ENCODE measurements at regions of chr6 and their contacts with region 1.

Region 1: DNA sequence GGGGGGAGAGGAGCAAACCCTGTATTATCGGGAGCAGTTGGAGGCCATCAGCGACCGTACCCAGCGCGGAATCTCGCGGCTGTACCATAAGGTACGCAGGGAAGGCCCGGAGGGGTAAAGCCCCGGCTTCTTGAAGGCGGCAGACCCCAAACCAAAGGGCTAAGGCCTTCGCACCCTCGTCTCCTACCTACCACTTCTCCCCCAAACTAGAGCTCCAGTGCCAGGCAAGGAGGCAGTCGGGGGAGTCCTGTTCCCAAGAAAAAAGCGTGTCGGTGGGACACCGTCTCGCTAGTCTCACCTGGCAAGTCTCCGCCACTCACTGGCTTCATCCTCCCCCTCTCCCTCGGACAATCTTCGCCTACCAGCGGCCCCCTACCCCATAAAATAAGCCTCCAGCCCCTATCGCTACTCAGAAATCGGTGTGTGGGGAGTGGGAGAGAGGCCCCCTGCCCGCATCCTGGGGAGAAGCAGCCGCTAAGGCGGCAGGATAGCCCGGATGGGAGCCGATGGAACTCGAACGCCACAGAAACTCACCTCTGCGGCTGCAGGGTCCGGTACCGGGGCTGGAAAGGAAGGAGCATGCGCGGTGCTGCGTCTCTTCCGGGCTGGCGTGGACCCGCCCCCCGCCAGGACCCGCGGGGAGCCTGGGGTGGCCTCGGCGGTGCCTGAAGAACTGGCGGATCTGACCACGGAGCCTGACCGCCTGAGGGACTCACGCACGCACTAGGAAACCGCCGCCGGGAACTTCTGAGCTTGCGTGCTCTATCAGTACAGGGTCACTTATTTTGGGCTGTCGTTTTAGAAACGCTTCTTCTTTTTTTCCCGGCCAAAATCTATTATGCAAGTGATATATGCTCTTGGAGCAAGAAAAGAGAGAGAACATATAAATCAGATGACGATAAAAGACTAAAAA is at the start of gene RPS10:
- DNase-seq: peak; percentile 81 to 96 (median 88)
- ATAC-seq: peak; percentile 97
- H3K4me3 ChIP-seq: peak within 1 kb of the TSS; percentile 75
- H3K4me3 Mint-ChIP-seq: peak within 1 kb of the TSS; percentile 99
- H3K27ac ChIP-seq: peak within 1 kb of the TSS; percentile 73 to 74
- H3K27ac Mint-ChIP-seq: peak within 1 kb of the TSS; percentile 97
- H3K4me1 ChIP-seq: peaks cover 37% of the 10 kb centered on the region
- H3K4me1 Mint-ChIP-seq: peaks cover 39% of the 10 kb centered on the region
- H3K27me3 ChIP-seq: no peaks in the 10 kb centered on the region
- H3K27me3 Mint-ChIP-seq: no peaks in the 10 kb centered on the region
- CTCF ChIP-seq: no peak
- total RNA-seq, gene RPS10: 3,088 to 3,122 TPM

Region 2: DNA sequence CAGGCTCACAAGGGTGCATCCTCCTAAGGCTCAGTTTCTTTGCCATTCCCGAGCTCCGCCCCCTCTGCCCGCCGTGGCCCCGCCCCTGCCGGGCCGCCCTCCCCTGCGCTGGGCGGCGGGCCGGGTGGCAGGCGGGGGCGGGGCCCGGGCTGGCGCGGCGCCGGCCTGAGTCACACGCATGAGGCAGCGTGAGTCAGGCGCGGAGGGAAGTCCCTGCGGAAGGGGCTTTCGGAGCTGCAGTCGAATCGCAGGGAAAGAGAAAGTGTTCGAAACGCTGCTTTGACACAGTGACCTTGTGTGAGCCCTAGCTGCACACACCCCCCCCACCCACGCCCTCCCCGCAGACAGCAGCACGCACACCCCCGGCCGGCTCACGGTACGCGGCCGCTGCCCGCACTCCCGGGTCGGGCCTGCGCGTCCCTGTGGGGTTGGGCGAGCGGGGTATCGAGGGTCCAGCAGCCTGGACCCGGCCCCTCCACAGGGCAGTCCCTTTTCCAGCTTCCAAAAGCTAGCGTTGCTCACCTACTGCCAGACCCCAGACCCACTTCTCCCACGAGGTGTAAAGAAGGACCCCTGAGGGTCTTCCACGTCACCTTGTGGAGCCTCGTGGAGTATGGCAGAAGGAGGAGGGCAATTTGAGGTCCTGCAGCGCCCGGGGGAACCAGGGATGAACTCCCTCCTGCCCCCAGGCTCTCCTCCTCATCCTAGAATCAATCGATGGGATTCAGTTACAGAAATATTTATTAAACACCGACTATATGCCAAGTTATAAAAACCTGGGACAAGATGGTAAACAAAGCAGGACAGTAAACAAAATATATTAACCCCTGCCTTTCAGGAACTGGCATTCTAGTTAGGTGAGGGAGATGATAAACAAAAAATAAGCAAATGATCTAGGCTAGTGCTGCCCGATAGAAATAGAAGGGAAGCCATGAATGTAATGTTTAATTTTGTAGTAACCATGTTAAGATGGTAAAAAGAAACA is 201.5 kb before region 1 on chr6:
- CTCF ChIA-PET with region 1: no interaction called
- POLR2A ChIA-PET with region 1: interaction called, 14 read pairs
- intact Hi-C with region 1: no loop called
- DNase-seq: peak; percentile 87 to 99 (median 93)
- ATAC-seq: peak; percentile 95
- H3K4me3 ChIP-seq: peak overlapping the region; percentile 62
- H3K4me3 Mint-ChIP-seq: peak overlapping the region; percentile 63
- H3K27ac ChIP-seq: peak overlapping the region; percentile 89 to 99
- H3K27ac Mint-ChIP-seq: peak overlapping the region; percentile 75
- H3K4me1 ChIP-seq: peaks cover 20% of the 10 kb centered on the region
- H3K4me1 Mint-ChIP-seq: peaks cover 6% of the 10 kb centered on the region
- H3K27me3 ChIP-seq: no peaks in the 10 kb centered on the region
- H3K27me3 Mint-ChIP-seq: no peaks in the 10 kb centered on the region
- CTCF ChIP-seq: no peak

Region 3: GRCh38 chr6:34315780-34316179 is 110.0 kb before region 1 on chr6:
- CTCF ChIA-PET with region 1: no interaction called
- POLR2A ChIA-PET with region 1: no interaction called
- intact Hi-C with region 1: no loop called
- DNase-seq: peak in 4 of 14 experiments; percentile 3 to 52 (median 38)
- ATAC-seq: peak; percentile 32
- H3K4me3 ChIP-seq: no peak overlapping the region
- H3K4me3 Mint-ChIP-seq: peak overlapping the region; percentile 17
- H3K27ac ChIP-seq: no peak overlapping the region
- H3K27ac Mint-ChIP-seq: peak overlapping the region; percentile 56
- H3K4me1 ChIP-seq: peaks cover 7% of the 10 kb centered on the region
- H3K4me1 Mint-ChIP-seq: peaks cover 56% of the 10 kb centered on the region
- H3K27me3 ChIP-seq: no peaks in the 10 kb centered on the region
- H3K27me3 Mint-ChIP-seq: no peaks in the 10 kb centered on the region
- CTCF ChIP-seq: no peak

Region 4: DNA sequence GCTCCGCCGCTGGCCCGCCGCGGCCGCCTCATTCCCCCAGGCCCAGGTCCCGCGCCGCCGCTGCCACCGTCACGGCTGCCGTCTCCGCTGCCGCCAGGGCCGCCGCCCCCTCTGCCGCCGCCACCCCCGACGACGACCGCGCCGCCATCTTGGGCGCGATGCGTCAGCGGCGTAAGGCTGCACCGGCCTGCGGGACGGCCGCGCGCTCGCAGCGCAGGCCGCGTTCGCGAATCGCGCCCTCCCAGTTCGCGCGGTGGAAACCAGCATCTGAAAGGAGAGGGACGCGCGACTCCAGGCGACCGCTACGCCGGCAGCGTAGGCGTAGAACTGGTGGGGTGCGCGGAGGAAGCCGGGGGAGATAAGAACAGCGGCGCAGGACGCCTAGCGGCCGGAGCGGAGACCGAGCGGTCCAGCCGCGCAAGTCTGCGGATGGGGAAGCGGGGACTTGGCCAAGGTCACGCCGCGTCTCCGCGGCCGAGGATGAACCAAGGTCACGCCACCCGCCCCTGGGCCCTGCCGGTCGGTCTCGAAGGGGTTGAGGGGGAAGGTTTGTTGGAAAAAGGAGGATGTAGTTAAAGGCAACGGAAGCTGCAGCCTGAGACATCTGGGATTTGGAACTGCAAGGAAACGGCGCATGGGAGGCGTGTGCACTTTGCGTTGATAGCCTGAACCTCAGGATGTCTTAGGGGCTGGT is 33.1 kb before region 1 on chr6 and contains the start of gene NUDT3:
- CTCF ChIA-PET with region 1: no interaction called
- POLR2A ChIA-PET with region 1: interaction called, 10 read pairs
- intact Hi-C with region 1: loop called (anchors 1 to 5 kb)
- DNase-seq: peak; percentile 86 to 98 (median 92)
- ATAC-seq: peak; percentile 87
- H3K4me3 ChIP-seq: peak within 1 kb of the TSS; percentile 83
- H3K4me3 Mint-ChIP-seq: peak within 1 kb of the TSS; percentile 96
- H3K27ac ChIP-seq: peak within 1 kb of the TSS; percentile 41 to 87
- H3K27ac Mint-ChIP-seq: no peak within 1 kb of the TSS
- H3K4me1 ChIP-seq: peaks cover 29% of the 10 kb centered on the region
- H3K4me1 Mint-ChIP-seq: peaks cover 31% of the 10 kb centered on the region
- H3K27me3 ChIP-seq: no peaks in the 10 kb centered on the region
- H3K27me3 Mint-ChIP-seq: no peaks in the 10 kb centered on the region
- CTCF ChIP-seq: peak; percentile 89
- total RNA-seq, gene NUDT3: 14.8 to 15.0 TPM

Region 5: DNA sequence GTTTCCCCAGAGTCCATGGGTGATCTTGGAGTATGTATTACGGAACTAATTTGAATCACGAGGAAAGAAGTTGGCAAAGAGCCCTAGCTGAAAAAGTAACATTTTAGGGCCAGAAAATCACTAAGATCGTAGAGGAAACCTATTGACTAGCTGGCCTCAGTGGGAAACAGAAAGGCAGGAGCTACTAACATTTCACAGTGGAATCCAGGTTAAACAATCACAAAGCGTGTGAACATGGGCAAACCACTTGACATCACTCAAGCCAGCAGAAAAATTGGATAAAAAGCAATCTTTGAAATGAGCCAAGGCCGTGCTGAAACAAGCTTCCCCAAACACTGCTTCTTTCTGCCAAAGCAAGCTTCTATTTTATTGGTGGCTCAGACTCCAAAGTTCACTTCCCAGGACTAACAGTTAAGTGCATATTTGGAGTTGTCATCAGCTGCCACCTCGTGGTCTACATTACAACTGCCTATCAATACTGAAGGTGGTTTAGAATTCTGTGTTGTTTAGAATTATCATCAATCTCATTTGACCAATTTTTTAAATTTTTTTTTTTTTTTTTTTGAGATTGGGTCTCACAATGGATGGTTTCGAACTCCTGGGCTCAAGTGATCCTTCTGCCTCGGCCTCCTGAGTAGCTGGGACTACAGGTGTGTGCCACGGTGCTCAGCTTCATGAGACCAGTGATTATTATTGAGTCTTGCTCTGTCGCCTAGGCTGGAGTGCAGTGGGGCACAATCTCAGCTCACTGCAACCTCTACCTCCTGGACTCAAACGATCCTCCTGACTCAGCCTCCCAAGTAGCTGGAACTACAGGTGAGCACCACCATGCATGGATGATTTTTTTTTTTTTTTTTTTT is 10.5 kb before region 1 on chr6:
- CTCF ChIA-PET with region 1: interaction called, 10 read pairs
- POLR2A ChIA-PET with region 1: interaction called, 14 read pairs
- intact Hi-C with region 1: no loop called
- DNase-seq: peak in 10 of 14 experiments; percentile 9 to 76 (median 38)
- ATAC-seq: peak; percentile 85
- H3K4me3 ChIP-seq: no peak overlapping the region
- H3K4me3 Mint-ChIP-seq: no peak overlapping the region
- H3K27ac ChIP-seq: no peak overlapping the region
- H3K27ac Mint-ChIP-seq: peak overlapping the region; percentile 38
- H3K4me1 ChIP-seq: no peaks in the 10 kb centered on the region
- H3K4me1 Mint-ChIP-seq: peaks cover 22% of the 10 kb centered on the region
- H3K27me3 ChIP-seq: no peaks in the 10 kb centered on the region
- H3K27me3 Mint-ChIP-seq: no peaks in the 10 kb centered on the region
- CTCF ChIP-seq: peak; percentile 64

Region 6: DNA sequence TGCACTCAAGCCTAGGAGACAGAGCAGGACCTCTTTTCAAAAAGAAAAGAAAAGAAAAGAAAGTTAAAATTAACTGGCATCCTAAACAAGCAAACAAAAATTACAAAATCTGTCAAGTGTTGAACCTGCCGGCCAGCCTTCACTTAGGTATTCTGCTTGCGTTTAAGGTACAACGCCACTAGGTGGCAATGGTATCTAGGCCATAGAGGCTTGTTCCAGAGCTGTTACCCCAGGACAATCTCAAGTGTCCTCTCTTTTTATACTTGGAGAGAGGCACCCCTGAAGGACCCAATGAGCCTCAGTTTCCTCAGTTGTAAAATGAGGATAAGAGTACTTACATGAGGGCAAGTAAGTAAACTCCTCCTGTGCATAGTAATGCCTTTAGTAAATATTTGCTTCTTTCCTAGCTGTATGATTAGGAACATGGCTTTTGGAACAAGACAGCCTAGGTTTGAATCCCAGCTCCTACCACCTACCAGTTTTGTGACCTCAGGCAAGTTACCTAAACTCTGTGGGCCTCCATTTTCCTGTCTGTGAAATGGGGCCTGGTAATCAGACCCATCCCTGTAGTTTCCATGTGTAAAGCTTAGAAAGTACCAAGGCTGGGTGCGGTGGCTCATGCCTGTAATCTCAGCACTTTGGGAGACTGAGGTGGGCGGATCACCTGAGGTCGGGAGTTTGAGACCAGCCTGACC is 34.3 kb after region 1 on chr6:
- CTCF ChIA-PET with region 1: no interaction called
- POLR2A ChIA-PET with region 1: no interaction called
- intact Hi-C with region 1: no loop called
- DNase-seq: peak in 13 of 14 experiments; percentile 13 to 76 (median 41)
- ATAC-seq: peak; percentile 71
- H3K4me3 ChIP-seq: no peak overlapping the region
- H3K4me3 Mint-ChIP-seq: no peak overlapping the region
- H3K27ac ChIP-seq: no peak overlapping the region
- H3K27ac Mint-ChIP-seq: no peak overlapping the region
- H3K4me1 ChIP-seq: no peaks in the 10 kb centered on the region
- H3K4me1 Mint-ChIP-seq: peaks cover 1% of the 10 kb centered on the region
- H3K27me3 ChIP-seq: peaks cover under 1 to 3% of the 10 kb centered on the region in 2 experiments
- H3K27me3 Mint-ChIP-seq: peaks cover 22% of the 10 kb centered on the region
- CTCF ChIP-seq: peak; percentile 71

Measured in CD4-positive, alpha-beta T cell (primary cell).